HepG2 (cell line): ENCODE measurements at regions of chr18 and their contacts with region 1.

Region 1: DNA sequence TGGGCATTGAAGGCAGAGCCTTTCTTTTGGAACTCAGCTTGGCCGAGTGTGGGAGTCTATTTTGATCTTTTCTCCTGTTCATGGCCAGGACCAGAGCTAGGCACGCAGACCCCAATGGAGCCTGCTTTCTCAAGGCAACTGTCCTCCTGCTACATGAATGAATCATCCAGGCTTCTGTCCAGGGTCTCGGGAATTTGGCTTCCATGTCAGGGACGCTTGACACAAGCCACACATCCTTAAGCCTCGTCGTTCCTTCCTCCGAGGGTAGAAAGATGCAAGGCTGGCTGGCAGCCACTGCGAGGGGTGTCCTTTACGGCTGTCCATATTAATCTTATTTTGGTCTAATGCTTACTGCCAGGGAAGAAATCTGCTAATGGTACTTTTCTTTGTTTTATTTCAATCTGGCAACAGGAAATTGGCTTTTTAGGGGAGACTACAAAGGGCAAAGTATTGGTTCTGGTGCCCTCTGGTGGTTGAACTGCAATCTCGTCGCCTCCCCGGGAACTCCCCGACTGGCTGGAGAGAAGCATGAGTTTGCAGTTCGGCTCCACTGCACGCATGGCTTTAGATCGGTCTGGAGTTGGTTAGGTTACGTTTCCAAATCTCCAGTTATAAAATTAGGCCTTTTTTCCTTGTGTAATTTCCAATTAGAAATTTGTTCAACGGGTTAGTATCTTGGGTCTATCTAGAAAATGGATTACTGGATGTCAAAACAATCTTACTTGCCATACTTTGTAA is 135.2 kb downstream of the ALPK2 start:
- DNase-seq: peak; percentile 76
- ATAC-seq: peak; percentile 89
- H3K4me3 ChIP-seq: no peak overlapping the region
- H3K27ac ChIP-seq: peak overlapping the region; percentile 63
- H3K4me1 ChIP-seq: peaks cover 98% of the 10 kb centered on the region
- H3K27me3 ChIP-seq: no peaks in the 10 kb centered on the region
- CTCF ChIP-seq: peak; percentile 91
- EP300 ChIP-seq: peak in 1 of 2 experiments; percentile 47; a peak in 1 of 4 replicates
- POLR2A ChIP-seq: no peak
- RAD21 ChIP-seq: peak; percentile 94

Region 2: DNA sequence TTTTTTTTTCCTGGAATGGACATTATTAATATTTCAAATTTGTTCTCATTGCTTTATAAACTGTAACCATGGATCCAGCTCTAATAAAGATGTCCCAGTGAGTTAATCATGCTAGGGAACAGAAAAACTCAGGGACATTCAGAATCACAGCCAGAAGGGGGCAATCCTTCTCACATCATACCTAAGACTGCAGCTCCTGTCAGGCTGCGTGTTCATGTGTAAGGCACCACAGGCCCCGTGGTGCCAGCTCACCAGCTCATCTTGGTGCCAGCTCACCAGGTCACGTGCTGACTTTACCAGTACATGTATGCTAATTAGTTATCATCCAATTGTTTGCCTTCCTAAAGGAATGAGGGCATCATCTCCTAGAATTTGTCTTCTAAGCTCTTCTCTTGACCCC is 534.4 kb before region 1 on chr18:
- CTCF ChIA-PET with region 1: no interaction called
- POLR2A ChIA-PET with region 1: interaction called, 7 read pairs
- in situ Hi-C with region 1: loop called (anchors 10 kb)
- intact Hi-C with region 1: no loop called
- DNase-seq: peak; percentile 66
- ATAC-seq: peak; percentile 96
- H3K4me3 ChIP-seq: no peak overlapping the region; a peak in 1 of 6 replicates
- H3K27ac ChIP-seq: no peak overlapping the region
- H3K4me1 ChIP-seq: peaks cover 30% of the 10 kb centered on the region
- H3K27me3 ChIP-seq: no peaks in the 10 kb centered on the region
- CTCF ChIP-seq: peak; percentile 83
- EP300 ChIP-seq: no peak
- POLR2A ChIP-seq: no peak
- RAD21 ChIP-seq: peak; percentile 62; the same call in 1 of the 2 replicates

Region 3: DNA sequence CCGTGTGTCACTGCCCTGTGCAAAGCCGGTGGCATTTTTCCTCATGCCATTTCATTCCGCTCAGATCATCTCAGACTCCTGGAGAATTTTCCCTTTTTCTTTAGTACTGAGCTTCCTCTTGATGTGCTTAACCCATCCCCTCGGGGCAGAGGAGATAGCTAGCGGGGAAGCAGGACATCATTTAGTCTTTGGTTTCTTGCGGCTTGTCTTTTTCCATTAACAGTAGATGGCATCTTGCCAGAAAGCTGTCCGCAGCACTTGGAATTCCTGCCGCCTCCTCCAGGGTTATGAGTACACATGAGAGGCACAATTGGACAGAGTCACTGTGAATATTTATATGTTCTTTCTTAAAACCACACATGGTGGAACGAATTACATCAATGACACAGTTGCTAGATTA is 91.4 kb before region 1 on chr18:
- CTCF ChIA-PET with region 1: interaction called, 36 read pairs
- POLR2A ChIA-PET with region 1: interaction called, 24 read pairs
- in situ Hi-C with region 1: loop called (anchors 5 kb)
- intact Hi-C with region 1: loop called (anchors 1 kb)
- DNase-seq: peak; percentile 58
- ATAC-seq: no peak
- H3K4me3 ChIP-seq: no peak overlapping the region
- H3K27ac ChIP-seq: peak overlapping the region; percentile 98
- H3K4me1 ChIP-seq: peaks cover 100% of the 10 kb centered on the region
- H3K27me3 ChIP-seq: no peaks in the 10 kb centered on the region
- CTCF ChIP-seq: no peak
- EP300 ChIP-seq: no peak
- POLR2A ChIP-seq: no peak
- RAD21 ChIP-seq: no peak

Region 4: GRCh38 chr18:58416704-58417683 is 76.7 kb before region 1 on chr18:
- CTCF ChIA-PET with region 1: interaction called, 4 read pairs
- POLR2A ChIA-PET with region 1: interaction called, 10 read pairs
- in situ Hi-C with region 1: no loop called
- intact Hi-C with region 1: no loop called
- DNase-seq: peak; percentile 70
- ATAC-seq: peak; percentile 27
- H3K4me3 ChIP-seq: peak overlapping the region in 1 of 3 experiments; percentile 42; a peak in 2 of 6 replicates
- H3K27ac ChIP-seq: peak overlapping the region; percentile 98
- H3K4me1 ChIP-seq: peaks cover 68% of the 10 kb centered on the region
- H3K27me3 ChIP-seq: no peaks in the 10 kb centered on the region
- CTCF ChIP-seq: no peak
- EP300 ChIP-seq: no peak
- POLR2A ChIP-seq: peak in 1 of 2 experiments; percentile 50; a peak in 2 of 4 replicates
- RAD21 ChIP-seq: no peak

Region 5: GRCh38 chr18:58624011-58624410 is 130.3 kb after region 1 on chr18:
- CTCF ChIA-PET with region 1: no interaction called
- POLR2A ChIA-PET with region 1: no interaction called
- in situ Hi-C with region 1: no loop called
- intact Hi-C with region 1: no loop called
- DNase-seq: no peak
- ATAC-seq: no peak
- H3K4me3 ChIP-seq: no peak overlapping the region
- H3K27ac ChIP-seq: no peak overlapping the region
- H3K4me1 ChIP-seq: peaks cover 18% of the 10 kb centered on the region
- H3K27me3 ChIP-seq: peaks cover 1 to 26% of the 10 kb centered on the region in 2 experiments; a peak in 2 of 5 replicates
- CTCF ChIP-seq: no peak
- EP300 ChIP-seq: no peak
- POLR2A ChIP-seq: no peak
- RAD21 ChIP-seq: no peak

Region 6: DNA sequence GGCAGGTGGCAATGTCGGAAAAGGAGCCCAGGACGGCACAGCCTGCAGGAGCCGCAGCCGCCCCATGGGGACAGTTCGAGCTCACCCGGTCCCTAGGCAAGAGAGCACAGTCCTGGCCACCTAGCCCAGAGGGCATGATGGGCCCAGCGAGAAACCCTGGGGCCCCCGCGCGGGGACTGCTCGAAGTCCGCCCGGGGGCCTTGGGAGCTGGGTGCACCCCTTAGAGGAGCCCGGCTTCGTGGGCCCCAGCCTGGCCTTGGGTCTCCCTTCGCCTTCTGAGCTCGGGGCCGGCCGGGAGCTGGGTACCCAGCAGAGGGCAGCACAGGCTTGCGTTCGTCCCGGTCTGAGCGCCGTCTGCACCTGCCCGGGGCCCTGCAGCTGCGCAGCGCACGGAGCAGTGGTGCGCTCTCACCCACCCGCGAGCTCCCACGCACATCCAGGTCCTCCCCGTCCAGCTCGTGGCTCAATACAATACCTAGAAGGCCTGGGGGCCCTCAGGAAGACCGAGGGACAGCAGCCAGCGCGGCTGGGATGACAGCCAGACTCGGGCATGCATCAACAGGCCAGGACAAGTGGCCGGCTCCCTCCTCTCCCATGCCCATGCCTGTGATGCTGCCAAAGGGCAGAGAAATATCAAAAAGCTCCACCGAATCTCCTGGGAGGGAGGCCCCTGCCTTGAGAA is 274.7 kb after region 1 on chr18:
- CTCF ChIA-PET with region 1: interaction called, 3 read pairs
- POLR2A ChIA-PET with region 1: no interaction called
- in situ Hi-C with region 1: loop called (anchors 5 kb)
- intact Hi-C with region 1: loop called (anchors 10 kb)
- DNase-seq: peak; percentile 35
- ATAC-seq: peak; percentile 98
- H3K4me3 ChIP-seq: peak overlapping the region; percentile 49 to 68 (median 49); a peak in 5 of 6 replicates
- H3K27ac ChIP-seq: no peak overlapping the region
- H3K4me1 ChIP-seq: peaks cover 52% of the 10 kb centered on the region
- H3K27me3 ChIP-seq: peaks cover 1 to 21% of the 10 kb centered on the region in 2 experiments; a peak in 2 of 5 replicates
- CTCF ChIP-seq: peak; percentile 97
- EP300 ChIP-seq: no peak
- POLR2A ChIP-seq: no peak
- RAD21 ChIP-seq: peak; percentile 86